K562 (cell line): ENCODE measurements at regions of chr1 and their contacts with region 1.

Region 1: GRCh38 chr1:193059268-193060225 is at the starts of genes RO60 and UCHL5:
- DNase-seq: peak; percentile 89 to 99 (median 92)
- ATAC-seq: peak; percentile 87
- H3K4me3 ChIP-seq: peak within 1 kb of the TSS; percentile 81
- H3K27ac ChIP-seq: peak within 1 kb of the TSS; percentile 94
- H3K4me1 ChIP-seq: peaks cover 10 to 25% of the 10 kb centered on the region in 2 experiments; a peak in 4 of 5 replicates
- H3K27me3 ChIP-seq: no peaks in the 10 kb centered on the region
- CTCF ChIP-seq: peak in 2 of 3 experiments; percentile 26 to 36; a peak in 2 of 6 replicates
- EP300 ChIP-seq: peak; percentile 65
- POLR2A ChIP-seq: peak; percentile 98
- RAD21 ChIP-seq: peak in 1 of 2 experiments; percentile 5; a peak in 1 of 4 replicates
- polyA plus RNA-seq, gene RO60: 49.2 to 187 TPM
- polyA plus RNA-seq, gene UCHL5: 61.0 to 68.9 TPM

Region 2: DNA sequence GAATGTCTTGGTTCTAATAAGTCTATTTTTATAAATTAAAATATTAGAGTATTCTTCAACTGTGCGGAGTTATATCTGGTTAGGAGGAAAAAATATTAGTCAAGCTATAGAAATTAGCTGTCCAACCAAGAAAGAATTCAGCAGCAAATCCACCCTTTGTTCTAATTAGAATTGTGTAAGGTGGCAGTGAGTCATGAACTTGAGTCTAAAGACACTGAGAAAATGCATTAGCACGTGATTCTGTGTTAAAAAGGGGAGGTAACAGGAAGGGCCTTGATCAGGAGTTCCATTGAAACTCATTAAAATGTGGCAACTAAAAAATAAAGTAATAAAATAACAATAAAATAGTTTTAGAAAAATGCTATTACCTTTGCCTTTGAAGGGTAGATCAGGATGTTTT is 1299.5 kb before region 1 on chr1:
- CTCF ChIA-PET with region 1: no interaction called
- POLR2A ChIA-PET with region 1: no interaction called
- in situ Hi-C with region 1: no loop called
- intact Hi-C with region 1: no loop called
- DNase-seq: no peak
- ATAC-seq: no peak
- H3K4me3 ChIP-seq: no peak overlapping the region
- H3K27ac ChIP-seq: no peak overlapping the region
- H3K4me1 ChIP-seq: peaks cover 0 to 3% of the 10 kb centered on the region in 2 experiments; a peak in 2 of 5 replicates
- H3K27me3 ChIP-seq: no peaks in the 10 kb centered on the region
- CTCF ChIP-seq: no peak
- EP300 ChIP-seq: no peak
- POLR2A ChIP-seq: no peak
- RAD21 ChIP-seq: no peak

Region 3: DNA sequence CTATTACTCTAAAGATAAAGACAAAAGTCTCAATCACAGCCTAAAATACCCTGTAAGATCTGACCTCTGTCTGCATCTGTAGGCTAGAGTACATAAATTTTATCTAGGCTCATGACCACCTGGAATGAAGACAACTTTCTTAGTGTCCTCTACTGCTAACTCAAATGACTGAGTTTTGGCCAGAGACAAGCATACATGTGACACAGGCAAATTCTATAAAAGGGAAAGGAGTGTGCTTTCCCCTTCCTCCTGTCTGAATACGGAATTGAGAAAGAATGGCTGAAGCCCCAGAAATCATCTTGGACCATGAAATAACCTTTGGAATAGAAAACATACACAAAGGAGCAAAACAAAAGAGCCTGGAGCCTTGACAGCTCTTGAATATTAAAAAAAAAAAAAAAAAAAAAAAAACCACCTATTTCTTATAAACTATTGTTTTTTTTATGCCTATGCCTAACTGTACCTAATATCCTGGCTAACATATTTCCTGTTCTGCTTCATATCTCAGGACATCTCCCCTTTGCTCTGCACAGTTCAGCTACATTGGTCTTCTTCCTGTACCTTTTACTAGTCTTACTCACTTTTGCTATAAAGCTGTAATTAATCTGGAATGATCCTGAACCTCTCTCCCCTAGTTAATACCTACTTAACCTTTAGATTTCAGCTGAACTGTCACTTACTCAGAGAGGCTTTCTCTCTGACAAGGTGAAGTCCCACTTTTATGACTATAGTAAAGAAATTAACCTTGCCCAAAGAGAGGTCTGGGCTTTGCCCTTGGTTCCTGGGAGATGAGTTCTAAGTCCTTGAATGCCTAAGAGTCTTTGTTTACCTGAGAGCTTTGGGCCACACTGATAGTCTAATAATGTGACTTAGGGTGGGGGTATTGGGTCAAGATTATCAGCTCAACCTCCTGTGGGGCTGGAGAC is 16.5 kb before region 1 on chr1:
- CTCF ChIA-PET with region 1: no interaction called
- POLR2A ChIA-PET with region 1: interaction called, 23 read pairs
- in situ Hi-C with region 1: no loop called
- intact Hi-C with region 1: no loop called
- DNase-seq: no peak
- ATAC-seq: peak; percentile 47
- H3K4me3 ChIP-seq: no peak overlapping the region
- H3K27ac ChIP-seq: 0 out of 3 replicates have a peak overlapping the region, but pooled peaks have one; percentile 5
- H3K4me1 ChIP-seq: peaks cover 0 to 2% of the 10 kb centered on the region in 2 experiments; a peak in 1 of 5 replicates
- H3K27me3 ChIP-seq: no peaks in the 10 kb centered on the region
- CTCF ChIP-seq: no peak
- EP300 ChIP-seq: no peak
- POLR2A ChIP-seq: no peak; the same call in 1 of the 2 replicates
- RAD21 ChIP-seq: no peak

Region 4: GRCh38 chr1:193069748-193070385 is 10.3 kb after region 1 on chr1:
- CTCF ChIA-PET with region 1: no interaction called
- POLR2A ChIA-PET with region 1: interaction called, 16 read pairs
- in situ Hi-C with region 1: no loop called
- intact Hi-C with region 1: no loop called
- DNase-seq: peak; percentile 56 to 63 (median 60)
- ATAC-seq: peak; percentile 59
- H3K4me3 ChIP-seq: no peak overlapping the region
- H3K27ac ChIP-seq: peak overlapping the region; percentile 80; the same call in 2 of the 3 replicates
- H3K4me1 ChIP-seq: peaks cover 15 to 49% of the 10 kb centered on the region in 2 experiments
- H3K27me3 ChIP-seq: no peaks in the 10 kb centered on the region
- CTCF ChIP-seq: peak; percentile 67 to 81 (median 74)
- EP300 ChIP-seq: no peak
- POLR2A ChIP-seq: no peak
- RAD21 ChIP-seq: no peak; a peak in 1 of 4 replicates

Region 5: GRCh38 chr1:193104906-193105820 is 45.6 kb after region 1 on chr1 and contains the start of gene GLRX2:
- CTCF ChIA-PET with region 1: no interaction called
- POLR2A ChIA-PET with region 1: interaction called, 26 read pairs
- in situ Hi-C with region 1: no loop called
- intact Hi-C with region 1: loop called (anchors 1 kb)
- DNase-seq: peak; percentile 97 to 98 (median 98)
- ATAC-seq: peak; percentile 91
- H3K4me3 ChIP-seq: peak within 1 kb of the TSS; percentile 73
- H3K27ac ChIP-seq: peak within 1 kb of the TSS; percentile 79
- H3K4me1 ChIP-seq: peaks cover 10 to 18% of the 10 kb centered on the region in 2 experiments; a peak in 4 of 5 replicates
- H3K27me3 ChIP-seq: no peaks in the 10 kb centered on the region
- CTCF ChIP-seq: peak in 1 of 3 experiments; percentile 14; a peak in 2 of 6 replicates
- EP300 ChIP-seq: peak; percentile 42; the same call in 1 of the 2 replicates
- POLR2A ChIP-seq: peak; percentile 84
- RAD21 ChIP-seq: peak; percentile 24 to 45; a peak in 3 of 4 replicates
- polyA plus RNA-seq, gene GLRX2: 13.3 to 16.8 TPM

Region 6: DNA sequence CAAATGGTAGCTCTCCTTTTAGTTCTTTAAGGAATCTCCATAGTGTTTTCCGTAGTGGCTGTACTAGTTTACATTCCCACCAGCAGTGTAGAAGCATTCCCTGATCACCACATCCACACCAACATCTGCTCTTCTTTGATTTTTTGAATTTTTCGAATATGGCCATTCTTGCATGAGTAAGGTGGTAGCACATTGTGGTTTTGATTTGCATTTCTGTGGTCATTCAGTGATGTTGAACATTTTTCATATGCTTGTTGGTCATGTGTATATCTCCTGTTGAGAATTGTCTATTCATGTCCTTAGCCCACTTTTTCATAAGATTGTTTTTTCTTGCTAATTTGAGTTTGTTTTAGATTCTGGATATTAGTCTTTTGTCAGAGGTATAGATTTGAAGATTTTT is 211.4 kb after region 1 on chr1:
- CTCF ChIA-PET with region 1: no interaction called
- POLR2A ChIA-PET with region 1: no interaction called
- in situ Hi-C with region 1: no loop called
- intact Hi-C with region 1: no loop called
- DNase-seq: no peak
- ATAC-seq: no peak
- H3K4me3 ChIP-seq: no peak overlapping the region
- H3K27ac ChIP-seq: no peak overlapping the region
- H3K4me1 ChIP-seq: no peaks in the 10 kb centered on the region
- H3K27me3 ChIP-seq: no peaks in the 10 kb centered on the region
- CTCF ChIP-seq: no peak
- EP300 ChIP-seq: no peak
- POLR2A ChIP-seq: no peak
- RAD21 ChIP-seq: no peak

Region 7: DNA sequence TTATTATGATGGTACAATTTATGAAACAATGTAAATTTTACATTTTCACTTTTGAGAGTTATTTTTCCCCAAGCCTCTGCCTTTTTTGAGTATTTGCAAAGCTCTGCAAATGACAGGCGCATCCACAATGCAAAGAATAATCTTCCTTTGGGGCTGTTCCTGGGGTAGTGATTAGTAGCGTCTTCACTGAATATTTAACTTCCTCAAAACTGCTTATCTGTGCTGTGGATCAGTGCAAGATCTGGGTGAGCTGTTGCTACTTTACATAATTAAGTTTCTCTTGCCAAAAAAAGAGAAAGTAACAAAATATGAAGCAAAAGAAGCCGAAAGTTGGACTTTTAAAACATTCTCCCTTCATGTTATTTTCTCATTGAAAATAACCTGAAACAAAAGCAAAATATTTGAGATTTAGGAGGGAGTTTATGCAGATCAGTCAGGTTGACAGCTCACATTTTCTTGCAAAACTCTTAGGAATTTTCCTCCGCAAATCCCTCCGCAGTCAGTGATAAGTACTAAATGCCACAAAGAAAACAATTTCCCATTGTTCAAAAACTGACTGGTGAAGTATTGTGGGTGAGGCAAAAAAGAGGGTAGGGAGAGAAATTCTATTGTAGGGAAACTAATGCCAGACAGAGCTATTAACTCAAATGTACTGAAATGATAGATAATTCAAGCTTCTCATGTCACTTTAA is 403.2 kb after region 1 on chr1:
- CTCF ChIA-PET with region 1: no interaction called
- POLR2A ChIA-PET with region 1: no interaction called
- in situ Hi-C with region 1: no loop called
- intact Hi-C with region 1: no loop called
- DNase-seq: no peak
- ATAC-seq: no peak
- H3K4me3 ChIP-seq: no peak overlapping the region
- H3K27ac ChIP-seq: no peak overlapping the region
- H3K4me1 ChIP-seq: no peaks in the 10 kb centered on the region
- H3K27me3 ChIP-seq: no peaks in the 10 kb centered on the region
- CTCF ChIP-seq: no peak
- EP300 ChIP-seq: no peak
- POLR2A ChIP-seq: no peak
- RAD21 ChIP-seq: no peak